Prostate gland (tissue), 2 donors: ENCODE measurements at regions of chr9 and their contacts with region 1.

Region 1: DNA sequence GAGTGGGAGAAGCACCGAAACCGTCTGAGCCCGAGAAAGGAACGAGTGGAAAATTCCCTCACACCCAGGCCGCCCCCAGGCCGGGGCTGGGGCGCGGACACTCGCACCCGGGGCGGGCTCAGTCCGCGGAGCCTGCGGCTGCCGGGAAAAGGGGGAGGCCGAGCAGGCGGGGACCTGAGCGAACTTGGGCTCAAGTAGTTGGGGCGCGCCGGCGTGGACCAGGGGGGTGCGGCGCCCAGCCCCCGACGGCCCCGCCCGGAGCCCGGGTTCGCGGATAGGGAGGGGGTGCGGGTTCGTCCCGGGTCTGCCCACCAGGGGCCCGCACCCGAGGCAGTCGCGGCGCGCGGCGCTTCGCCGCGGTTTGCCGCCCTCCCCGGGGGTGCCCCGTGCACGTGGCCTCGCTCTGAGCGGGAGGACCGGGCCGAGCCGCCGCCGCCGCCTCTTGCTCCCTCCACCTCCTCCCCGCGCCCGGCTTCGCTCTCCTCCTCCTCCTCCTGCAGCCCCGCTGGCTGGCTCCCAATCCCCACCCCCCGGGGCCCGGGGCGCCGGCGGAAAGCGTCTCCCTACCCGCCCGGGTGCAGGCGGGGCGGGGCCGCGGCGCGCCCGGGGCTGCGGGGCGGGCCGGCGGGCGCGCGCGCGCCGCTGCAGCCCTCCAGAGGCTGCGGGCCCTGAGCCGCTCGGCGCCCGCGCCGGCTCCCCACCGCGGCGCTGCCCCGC is 1.1 kb upstream of the NFIB start:
- DNase-seq: peak; percentile 94
- H3K4me3 ChIP-seq: peak overlapping the region; percentile 73 to 86
- H3K27ac ChIP-seq: peak overlapping the region; percentile 98 to 99
- H3K4me1 ChIP-seq: peaks cover 6% of the 10 kb centered on the region
- H3K27me3 ChIP-seq: no peaks in the 10 kb centered on the region
- CTCF ChIP-seq: peak in 2 of 4 experiments; percentile 15 to 39
- POLR2A ChIP-seq: peak; percentile 64

Region 2: GRCh38 chr9:14030375-14031059 is 284.6 kb before region 1 on chr9:
- intact Hi-C with region 1: loop called (anchors 2 kb)
- DNase-seq: peak; percentile 48
- H3K4me3 ChIP-seq: peak overlapping the region in 1 of 2 donors; percentile 4
- H3K27ac ChIP-seq: peak overlapping the region; percentile 66 to 80
- H3K4me1 ChIP-seq: peaks cover 11% of the 10 kb centered on the region
- H3K27me3 ChIP-seq: no peaks in the 10 kb centered on the region
- CTCF ChIP-seq: no peak
- POLR2A ChIP-seq: no peak

Region 3: GRCh38 chr9:14096258-14096922 is 218.7 kb before region 1 on chr9:
- intact Hi-C with region 1: loop called (anchors 10 kb)
- DNase-seq: peak; percentile 40
- H3K4me3 ChIP-seq: peak overlapping the region in 1 of 2 donors; percentile 5
- H3K27ac ChIP-seq: peak overlapping the region; percentile 69 to 71
- H3K4me1 ChIP-seq: peaks cover 3% of the 10 kb centered on the region
- H3K27me3 ChIP-seq: no peaks in the 10 kb centered on the region
- CTCF ChIP-seq: no peak
- POLR2A ChIP-seq: no peak

Region 4: GRCh38 chr9:14203356-14204056 is 111.6 kb before region 1 on chr9:
- intact Hi-C with region 1: loop called (anchors 5 kb)
- DNase-seq: peak; percentile 61
- H3K4me3 ChIP-seq: no peak overlapping the region
- H3K27ac ChIP-seq: peak overlapping the region; percentile 40 to 69
- H3K4me1 ChIP-seq: peaks cover 6% of the 10 kb centered on the region
- H3K27me3 ChIP-seq: no peaks in the 10 kb centered on the region
- CTCF ChIP-seq: no peak
- POLR2A ChIP-seq: no peak

Region 5: DNA sequence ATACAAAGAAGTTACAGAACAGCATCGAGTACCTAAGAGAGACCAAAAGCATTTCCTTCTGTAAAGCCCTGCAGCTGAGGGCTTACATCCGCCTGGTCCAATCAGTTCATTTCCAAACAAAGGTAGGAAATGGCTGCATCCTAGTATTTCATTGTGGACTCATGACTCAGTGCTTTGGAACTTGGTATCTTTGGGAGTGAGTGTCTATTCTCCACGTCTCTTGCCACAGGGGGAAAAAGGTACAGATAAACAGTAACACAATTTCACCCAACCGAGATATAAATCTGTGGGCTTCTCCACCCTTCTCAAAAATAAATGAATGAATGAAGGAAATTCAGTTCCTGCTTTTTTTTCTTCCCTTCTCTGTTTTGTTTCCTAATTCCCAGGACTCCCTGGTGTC is 76.5 kb before region 1 on chr9:
- intact Hi-C with region 1: no loop called
- DNase-seq: peak; percentile 17
- H3K4me3 ChIP-seq: no peak overlapping the region
- H3K27ac ChIP-seq: no peak overlapping the region
- H3K4me1 ChIP-seq: no peaks in the 10 kb centered on the region
- H3K27me3 ChIP-seq: no peaks in the 10 kb centered on the region
- CTCF ChIP-seq: no peak
- POLR2A ChIP-seq: no peak

Region 6: DNA sequence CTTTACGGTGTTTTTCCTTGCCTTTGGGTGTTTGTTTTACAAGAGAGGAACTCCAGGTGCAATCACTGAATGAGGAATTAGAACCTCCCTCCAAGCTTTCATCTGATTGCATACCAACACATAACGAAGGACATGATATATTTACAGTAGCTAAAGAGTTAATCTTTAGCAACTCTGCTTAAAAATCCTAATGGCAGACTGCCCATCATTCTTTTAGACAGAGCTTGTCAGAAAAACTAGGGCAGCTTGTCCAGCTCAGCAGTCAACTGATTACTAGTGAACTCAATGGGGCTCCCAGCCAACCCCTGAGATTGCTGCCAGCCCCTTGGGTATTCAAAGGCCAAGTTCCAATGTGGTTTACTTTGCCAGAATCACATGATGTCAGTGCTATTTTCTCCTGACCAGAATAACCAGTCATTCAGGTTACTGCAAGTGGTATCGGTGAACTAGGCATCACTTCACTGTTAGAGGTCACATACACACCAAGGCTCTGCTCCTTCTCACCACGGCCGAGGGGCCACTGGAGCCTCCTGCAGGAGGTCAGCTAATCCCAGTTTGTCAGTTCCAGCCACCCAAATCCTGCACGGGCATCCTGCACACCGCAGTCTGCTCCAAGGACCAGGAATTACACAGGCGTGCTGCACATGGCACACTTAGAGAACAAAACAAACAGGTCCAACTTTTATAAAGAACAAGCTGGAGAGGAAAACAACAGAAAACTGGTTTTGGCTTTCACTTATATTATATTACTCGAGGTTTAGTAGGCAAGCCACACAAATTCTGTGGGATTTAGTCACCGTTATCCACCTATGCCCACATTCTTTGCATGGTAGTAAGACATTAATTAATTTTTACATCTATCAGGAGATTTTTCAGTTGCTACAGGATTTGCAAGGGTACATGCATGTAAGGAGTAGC is 63.7 kb before region 1 on chr9:
- intact Hi-C with region 1: loop called (anchors 5 kb)
- DNase-seq: peak; percentile 94
- H3K4me3 ChIP-seq: no peak overlapping the region
- H3K27ac ChIP-seq: peak overlapping the region; percentile 58 to 59
- H3K4me1 ChIP-seq: peaks cover 12% of the 10 kb centered on the region
- H3K27me3 ChIP-seq: no peaks in the 10 kb centered on the region
- CTCF ChIP-seq: no peak
- POLR2A ChIP-seq: no peak

Region 7: GRCh38 chr9:14347406-14348122 is 32.5 kb after region 1 on chr9:
- intact Hi-C with region 1: loop called (anchors 5 kb)
- DNase-seq: no peak
- H3K4me3 ChIP-seq: peak overlapping the region; percentile 33 to 45
- H3K27ac ChIP-seq: peak overlapping the region; percentile 81 to 83
- H3K4me1 ChIP-seq: no peaks in the 10 kb centered on the region
- H3K27me3 ChIP-seq: no peaks in the 10 kb centered on the region
- CTCF ChIP-seq: peak in 2 of 4 experiments; percentile 25 to 31
- POLR2A ChIP-seq: peak; percentile 9